ENCODE measurements at regions of chr15 and their contacts with region 1.

Region 1: DNA sequence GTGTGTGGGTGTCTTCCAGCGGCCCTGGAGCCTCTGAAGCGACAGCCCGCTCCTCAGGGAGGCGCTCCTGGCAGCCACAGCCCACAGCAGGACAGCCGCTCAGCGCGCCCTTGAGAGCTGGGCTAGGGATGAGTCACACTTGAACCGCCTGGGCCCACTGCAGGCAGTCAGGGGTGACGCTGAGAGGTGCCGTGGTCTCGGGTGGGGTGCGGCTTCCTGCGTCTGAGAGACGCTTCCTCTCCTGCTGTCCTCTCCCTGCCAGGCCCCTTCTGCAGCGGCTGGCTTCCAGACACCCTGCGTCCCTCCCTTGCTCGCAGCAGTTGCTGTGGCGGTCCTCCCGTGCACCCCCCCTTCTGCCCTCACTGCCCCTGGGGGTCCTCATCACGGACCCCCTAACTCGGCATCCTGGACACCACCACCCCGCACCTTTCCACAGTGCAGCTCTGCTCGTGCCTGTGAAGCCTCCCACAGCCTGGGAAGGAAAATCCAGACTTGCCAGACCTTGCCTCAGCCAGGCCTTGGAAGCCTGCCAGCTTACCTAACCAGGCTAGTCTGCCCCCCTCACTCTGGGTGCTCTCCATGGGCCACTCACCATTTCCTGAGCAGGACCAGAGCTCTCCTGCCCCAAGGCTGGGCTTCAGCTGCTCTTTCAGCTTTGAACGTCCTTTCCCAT is 1.1 kb upstream of the SPTBN5 start:
- DNase-seq: peak; percentile 82 to 96 (median 94)
- ATAC-seq: peak; percentile 95
- H3K4me3 ChIP-seq: peak overlapping the region; percentile 45 to 53
- H3K4me3 Mint-ChIP-seq: peak overlapping the region; percentile 78
- H3K27ac ChIP-seq: peak overlapping the region; percentile 80 to 95
- H3K27ac Mint-ChIP-seq: peak overlapping the region; percentile 98
- H3K4me1 ChIP-seq: peaks cover 30% of the 10 kb centered on the region
- H3K4me1 Mint-ChIP-seq: peaks cover 36% of the 10 kb centered on the region
- H3K27me3 ChIP-seq: no peaks in the 10 kb centered on the region
- H3K27me3 Mint-ChIP-seq: no peaks in the 10 kb centered on the region
- CTCF ChIP-seq: no peak

Region 2: GRCh38 chr15:41870689-41871081 is 24.2 kb before region 1 on chr15:
- CTCF ChIA-PET with region 1: interaction called, 3 read pairs
- POLR2A ChIA-PET with region 1: interaction called, 10 read pairs
- intact Hi-C with region 1: loop called (anchors 5 kb)
- DNase-seq: peak in 8 of 9 experiments; percentile 20 to 75 (median 60)
- ATAC-seq: peak; percentile 95
- H3K4me3 ChIP-seq: no peak overlapping the region
- H3K4me3 Mint-ChIP-seq: no peak overlapping the region
- H3K27ac ChIP-seq: no peak overlapping the region
- H3K27ac Mint-ChIP-seq: peak overlapping the region; percentile 60
- H3K4me1 ChIP-seq: peaks cover 10% of the 10 kb centered on the region
- H3K4me1 Mint-ChIP-seq: peaks cover 4% of the 10 kb centered on the region
- H3K27me3 ChIP-seq: no peaks in the 10 kb centered on the region
- H3K27me3 Mint-ChIP-seq: no peaks in the 10 kb centered on the region
- CTCF ChIP-seq: no peak

Region 3: DNA sequence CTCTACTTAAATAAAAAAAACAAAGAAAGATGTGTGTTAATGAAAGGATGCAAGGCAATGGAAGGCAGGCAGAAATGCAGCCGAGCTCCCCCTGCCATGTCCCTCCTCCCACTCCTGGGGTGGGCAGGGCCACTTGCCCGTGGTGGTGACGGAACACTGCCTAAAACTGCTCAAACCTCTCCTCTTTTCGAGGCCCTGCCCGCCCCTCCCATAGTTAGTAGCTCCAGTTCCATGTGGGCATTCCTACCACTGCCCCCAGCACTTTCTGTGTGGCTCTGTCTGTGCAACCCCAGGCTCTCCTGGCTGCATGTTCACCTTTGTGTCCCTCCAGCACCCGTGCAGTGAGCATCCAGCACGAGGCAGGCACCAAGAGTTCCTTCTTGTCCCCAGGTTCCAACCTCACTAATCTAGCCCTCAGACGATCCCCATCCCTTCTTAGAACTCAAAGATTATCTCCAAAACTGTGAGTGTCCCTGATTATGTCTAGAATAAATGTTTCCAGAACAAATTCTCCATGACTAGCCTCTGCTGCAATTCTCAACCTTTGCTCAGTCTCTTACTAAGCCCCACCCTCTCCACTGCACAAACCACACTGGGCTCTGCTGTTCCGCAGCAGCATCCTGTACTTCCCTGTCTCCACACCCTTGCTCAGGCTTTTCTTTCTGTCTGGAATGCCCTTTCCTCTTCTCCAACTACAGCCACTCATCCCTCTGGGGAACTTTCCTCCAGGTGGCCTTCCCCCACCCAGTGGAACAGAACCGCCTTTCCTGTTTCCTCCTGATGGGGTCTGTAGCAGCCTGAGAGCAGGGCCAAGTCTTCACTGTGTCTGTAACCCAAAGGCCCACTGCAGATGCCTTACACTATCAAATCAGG is 31.5 kb after region 1 on chr15:
- CTCF ChIA-PET with region 1: no interaction called
- POLR2A ChIA-PET with region 1: no interaction called
- intact Hi-C with region 1: no loop called
- DNase-seq: peak in 2 of 9 experiments; percentile 14 to 38
- ATAC-seq: peak; percentile 69
- H3K4me3 ChIP-seq: no peak overlapping the region
- H3K4me3 Mint-ChIP-seq: peak overlapping the region; percentile 47
- H3K27ac ChIP-seq: no peak overlapping the region
- H3K27ac Mint-ChIP-seq: peak overlapping the region; percentile 72
- H3K4me1 ChIP-seq: peaks cover 11% of the 10 kb centered on the region
- H3K4me1 Mint-ChIP-seq: peaks cover 9% of the 10 kb centered on the region
- H3K27me3 ChIP-seq: no peaks in the 10 kb centered on the region
- H3K27me3 Mint-ChIP-seq: no peaks in the 10 kb centered on the region
- CTCF ChIP-seq: no peak

Region 4: DNA sequence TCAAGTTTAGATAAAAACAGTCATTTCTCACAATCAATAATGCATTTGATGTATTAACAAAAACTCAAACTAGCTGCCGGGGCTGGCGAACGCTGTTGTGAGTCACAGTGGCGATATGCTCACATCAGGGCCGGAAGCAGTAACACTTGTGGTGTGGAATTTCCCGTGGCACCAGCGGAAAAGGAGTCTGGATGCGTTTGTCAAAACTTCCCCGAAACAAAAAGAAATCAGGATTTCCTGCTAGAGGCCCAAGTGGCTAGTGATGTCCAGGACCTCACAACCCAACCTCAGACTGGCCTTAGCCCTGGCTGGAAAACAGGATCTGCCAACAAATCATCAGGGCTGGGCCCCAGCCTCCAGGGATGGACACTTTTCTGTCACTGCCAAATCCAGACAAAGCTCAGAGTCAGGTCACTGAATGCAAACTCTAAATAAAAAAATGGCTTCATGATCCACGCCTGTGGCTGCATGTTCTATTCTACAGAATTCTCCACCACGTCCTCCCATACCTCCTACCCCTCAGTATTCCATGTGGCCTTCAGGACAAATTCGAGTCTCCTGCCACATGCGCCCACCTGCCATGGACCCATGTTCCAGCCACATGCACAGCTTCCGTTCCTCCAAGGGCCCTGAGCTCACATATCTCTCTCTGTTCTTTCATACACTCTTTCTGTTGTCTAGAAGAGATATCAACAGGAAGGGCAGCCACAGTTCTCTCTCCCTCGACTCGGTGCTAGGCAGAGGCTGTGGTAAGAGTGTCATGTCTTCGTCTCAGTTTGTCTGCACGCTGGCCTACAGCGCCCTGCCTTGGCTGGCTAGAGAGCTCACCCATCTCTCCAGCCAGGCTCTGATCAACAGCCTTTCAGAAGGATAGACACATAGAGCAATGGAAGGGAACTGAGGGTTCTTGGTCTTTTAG is 42.0 kb after region 1 on chr15:
- CTCF ChIA-PET with region 1: interaction called, 3 read pairs
- POLR2A ChIA-PET with region 1: interaction called, 20 read pairs
- intact Hi-C with region 1: loop called in 1 of 2 experiments (anchors 1 kb)
- DNase-seq: peak; percentile 52 to 94 (median 74)
- ATAC-seq: peak; percentile 80
- H3K4me3 ChIP-seq: peak overlapping the region; percentile 9 to 27
- H3K4me3 Mint-ChIP-seq: peak overlapping the region; percentile 75
- H3K27ac ChIP-seq: peak overlapping the region; percentile 86 to 97
- H3K27ac Mint-ChIP-seq: peak overlapping the region; percentile 96
- H3K4me1 ChIP-seq: peaks cover 55% of the 10 kb centered on the region
- H3K4me1 Mint-ChIP-seq: peaks cover 58% of the 10 kb centered on the region
- H3K27me3 ChIP-seq: no peaks in the 10 kb centered on the region
- H3K27me3 Mint-ChIP-seq: no peaks in the 10 kb centered on the region
- CTCF ChIP-seq: peak; percentile 39